ENCODE measurements at regions of chr18 and their contacts with region 1.

Region 1: GRCh38 chr18:59823596-59824195 is 76.1 kb upstream of the PMAIP1 start:
- DNase-seq: peak; percentile 43 to 52
- H3K4me3 ChIP-seq: no peak overlapping the region
- H3K4me3 Mint-ChIP-seq: no peak overlapping the region
- H3K27ac Mint-ChIP-seq: no peak overlapping the region
- H3K4me1 ChIP-seq: no peaks in the 10 kb centered on the region
- H3K4me1 Mint-ChIP-seq: no peaks in the 10 kb centered on the region
- H3K27me3 ChIP-seq: no peaks in the 10 kb centered on the region
- H3K27me3 Mint-ChIP-seq: no peaks in the 10 kb centered on the region
- CTCF ChIP-seq: peak in 1 of 2 experiments; percentile 57

Region 2: GRCh38 chr18:59459369-59460079 is 364.2 kb before region 1 on chr18:
- CTCF ChIA-PET with region 1: interaction called, 18 read pairs
- POLR2A ChIA-PET with region 1: no interaction called
- intact Hi-C with region 1: loop called (anchors 1 kb)
- DNase-seq: no peak
- H3K4me3 ChIP-seq: no peak overlapping the region
- H3K4me3 Mint-ChIP-seq: no peak overlapping the region
- H3K27ac Mint-ChIP-seq: no peak overlapping the region
- H3K4me1 ChIP-seq: no peaks in the 10 kb centered on the region
- H3K4me1 Mint-ChIP-seq: no peaks in the 10 kb centered on the region
- H3K27me3 ChIP-seq: no peaks in the 10 kb centered on the region
- H3K27me3 Mint-ChIP-seq: peaks cover 7% of the 10 kb centered on the region
- CTCF ChIP-seq: peak in 1 of 2 experiments; percentile 46

Region 3: DNA sequence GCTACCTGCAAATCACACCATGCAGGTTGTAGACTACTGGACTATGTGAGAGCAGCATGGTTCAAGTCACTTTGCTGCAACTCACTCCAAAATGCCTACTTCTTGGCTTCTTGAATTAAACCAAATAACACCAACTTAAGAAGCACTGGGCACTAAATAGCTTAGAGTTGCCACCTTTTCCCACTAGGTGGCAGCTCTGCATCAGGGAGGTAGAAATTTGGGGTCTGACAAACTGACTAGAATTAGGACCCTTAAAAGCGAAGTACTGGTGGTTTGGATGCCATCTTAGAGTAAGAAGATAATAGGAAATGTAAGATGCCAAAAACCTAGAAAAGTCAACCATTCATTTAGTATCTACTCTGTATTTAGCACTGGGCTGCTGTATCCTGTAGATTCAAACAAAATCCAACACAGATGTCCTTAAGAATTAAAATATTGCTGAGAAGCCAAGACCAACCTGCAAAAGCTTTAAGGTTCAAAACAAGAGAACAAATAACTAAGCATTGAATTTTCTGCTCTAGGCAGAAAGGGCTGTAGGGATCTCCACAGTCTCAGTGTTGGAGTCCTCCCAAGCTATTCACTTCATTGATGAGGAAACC is 192.0 kb before region 1 on chr18:
- CTCF ChIA-PET with region 1: interaction called, 16 read pairs
- POLR2A ChIA-PET with region 1: no interaction called
- intact Hi-C with region 1: no loop called
- DNase-seq: no peak
- H3K4me3 ChIP-seq: no peak overlapping the region
- H3K4me3 Mint-ChIP-seq: no peak overlapping the region
- H3K27ac Mint-ChIP-seq: no peak overlapping the region
- H3K4me1 ChIP-seq: no peaks in the 10 kb centered on the region
- H3K4me1 Mint-ChIP-seq: no peaks in the 10 kb centered on the region
- H3K27me3 ChIP-seq: no peaks in the 10 kb centered on the region
- H3K27me3 Mint-ChIP-seq: peaks cover 10% of the 10 kb centered on the region
- CTCF ChIP-seq: peak; percentile 4 to 13

Region 4: GRCh38 chr18:59783138-59783537 is 40.6 kb before region 1 on chr18:
- CTCF ChIA-PET with region 1: interaction called, 7 read pairs
- POLR2A ChIA-PET with region 1: no interaction called
- intact Hi-C with region 1: loop called (anchors 1 kb)
- DNase-seq: peak; percentile 22 to 27
- H3K4me3 ChIP-seq: no peak overlapping the region
- H3K4me3 Mint-ChIP-seq: no peak overlapping the region
- H3K27ac Mint-ChIP-seq: no peak overlapping the region
- H3K4me1 ChIP-seq: no peaks in the 10 kb centered on the region
- H3K4me1 Mint-ChIP-seq: peaks cover 6% of the 10 kb centered on the region
- H3K27me3 ChIP-seq: no peaks in the 10 kb centered on the region
- H3K27me3 Mint-ChIP-seq: peaks cover 6% of the 10 kb centered on the region
- CTCF ChIP-seq: peak; percentile 12 to 22

Region 5: DNA sequence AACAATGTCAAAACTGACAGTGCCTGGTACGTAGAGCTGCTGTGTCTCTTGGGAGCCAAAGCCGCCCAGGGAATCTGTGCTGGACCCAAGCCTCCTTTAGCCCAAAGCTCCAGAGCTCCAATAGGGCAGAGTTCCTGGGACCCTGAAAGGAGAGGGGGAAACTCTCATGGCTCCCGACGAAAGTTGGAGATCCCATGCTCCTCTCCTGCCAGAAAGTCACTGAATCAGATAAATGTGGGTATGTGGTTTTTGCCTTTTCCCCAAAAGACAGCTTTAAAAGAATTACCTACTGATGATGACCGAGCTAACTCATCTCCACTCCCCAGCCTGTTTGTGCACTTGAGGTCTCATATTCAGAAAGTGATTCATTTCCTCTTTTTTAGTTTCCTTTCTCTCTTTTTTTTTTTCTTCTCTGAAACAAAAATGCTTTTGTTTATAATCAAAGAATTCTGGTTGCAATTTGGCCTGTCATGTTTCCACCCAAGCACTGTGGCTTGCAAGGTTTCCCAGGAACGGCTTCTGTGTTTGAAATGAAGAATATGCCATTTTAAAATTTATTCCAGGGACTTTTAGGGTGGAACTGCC is 62.0 kb after region 1 on chr18:
- CTCF ChIA-PET with region 1: no interaction called
- POLR2A ChIA-PET with region 1: no interaction called
- intact Hi-C with region 1: no loop called
- DNase-seq: no peak
- H3K4me3 ChIP-seq: no peak overlapping the region
- H3K4me3 Mint-ChIP-seq: no peak overlapping the region
- H3K27ac Mint-ChIP-seq: no peak overlapping the region
- H3K4me1 ChIP-seq: no peaks in the 10 kb centered on the region
- H3K4me1 Mint-ChIP-seq: peaks cover 7% of the 10 kb centered on the region
- H3K27me3 ChIP-seq: no peaks in the 10 kb centered on the region
- H3K27me3 Mint-ChIP-seq: no peaks in the 10 kb centered on the region
- CTCF ChIP-seq: no peak